Activated CD8-positive, alpha-beta T cell treated with anti-CD3 and anti-CD28 coated beads for 36 hours (primary cell): ENCODE measurements at regions of chr12 and their contacts with region 1.

Region 1: DNA sequence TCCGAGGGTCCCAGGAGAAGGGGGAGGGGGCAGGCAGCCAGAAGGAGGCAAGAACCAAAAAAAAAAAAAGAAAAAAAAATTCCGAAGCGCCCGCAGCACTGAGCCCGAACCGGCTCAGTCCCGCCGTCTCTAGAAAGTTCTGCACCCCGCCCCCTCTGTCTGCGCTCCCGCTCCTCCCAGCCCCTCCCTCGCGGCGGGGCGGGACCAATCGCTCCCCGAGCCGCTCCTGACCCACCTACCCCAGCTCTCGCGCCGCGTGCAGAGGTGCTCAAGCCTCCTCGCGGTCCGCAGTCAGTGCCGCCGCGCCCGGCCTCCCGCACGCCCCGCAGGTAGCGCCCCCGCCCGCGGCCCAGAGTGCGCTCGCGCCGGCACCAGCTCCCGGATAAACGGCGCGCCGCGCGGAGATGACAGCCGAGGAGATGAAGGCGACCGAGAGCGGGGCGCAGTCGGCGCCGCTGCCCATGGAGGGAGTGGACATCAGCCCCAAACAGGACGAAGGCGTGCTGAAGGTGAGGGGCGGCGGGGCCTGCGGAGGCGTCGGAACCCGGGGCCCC is at the start of gene FKBP4:
- DNase-seq: peak; percentile 92
- ATAC-seq: peak; percentile 93
- H3K4me3 Mint-ChIP-seq: peak within 1 kb of the TSS; percentile 92
- H3K27ac Mint-ChIP-seq: peak within 1 kb of the TSS; percentile 84
- H3K4me1 Mint-ChIP-seq: peaks cover 29% of the 10 kb centered on the region
- H3K27me3 Mint-ChIP-seq: no peaks in the 10 kb centered on the region
- CTCF ChIP-seq: no peak
- total RNA-seq, gene FKBP4: 206 to 219 TPM

Region 2: DNA sequence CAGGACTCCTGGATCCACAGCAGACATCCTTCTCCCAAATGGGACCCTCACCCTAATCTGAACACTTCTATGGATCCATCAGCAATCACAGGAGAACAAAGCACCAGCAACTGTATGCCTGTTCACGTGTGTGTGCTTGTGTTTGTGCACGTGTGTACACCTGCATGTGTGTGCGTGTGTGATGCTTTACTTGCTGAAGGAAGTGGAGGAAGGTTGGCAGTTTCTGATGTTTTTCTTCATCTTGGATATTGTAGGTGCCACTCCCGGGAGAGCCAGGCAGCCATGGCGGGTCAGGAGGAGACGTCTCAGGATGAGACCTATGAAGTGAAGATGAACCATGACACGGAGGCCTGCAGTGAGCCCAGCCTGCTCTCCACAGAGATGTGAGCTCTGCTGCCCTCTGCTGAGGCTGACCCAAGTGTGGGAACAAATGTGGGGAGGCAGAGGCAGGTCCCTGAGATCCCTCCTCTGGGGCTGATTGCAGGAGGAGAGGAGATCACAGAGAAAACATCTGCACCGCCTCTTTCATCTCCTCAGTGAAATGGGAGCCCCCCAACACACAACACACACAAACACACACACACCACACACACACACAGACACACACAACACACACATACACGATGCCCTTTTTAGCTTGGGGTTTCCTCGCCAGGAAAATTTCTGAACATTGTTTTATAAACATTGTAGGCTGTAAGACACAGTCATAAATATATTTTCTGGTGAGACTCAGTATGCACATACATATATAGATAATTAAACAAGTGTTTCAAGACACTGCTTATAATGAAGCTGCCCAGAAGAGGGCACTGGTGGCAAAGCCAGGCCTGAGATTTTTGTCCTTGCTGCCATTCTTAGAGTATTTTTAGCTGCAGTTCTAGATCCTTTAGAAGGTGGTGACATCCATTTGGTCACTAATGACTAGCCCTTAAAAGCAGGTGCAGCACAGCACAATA is 112.2 kb before region 1 on chr12:
- CTCF ChIA-PET with region 1: interaction called, 12 read pairs
- POLR2A ChIA-PET with region 1: no interaction called
- intact Hi-C with region 1: no loop called
- DNase-seq: peak; percentile 72
- ATAC-seq: peak; percentile 77
- H3K4me3 Mint-ChIP-seq: no peak overlapping the region
- H3K27ac Mint-ChIP-seq: peak overlapping the region; percentile 87
- H3K4me1 Mint-ChIP-seq: peaks cover 7% of the 10 kb centered on the region
- H3K27me3 Mint-ChIP-seq: no peaks in the 10 kb centered on the region
- CTCF ChIP-seq: peak; percentile 68

Region 3: GRCh38 chr12:2691006-2691344 is 103.8 kb before region 1 on chr12:
- CTCF ChIA-PET with region 1: interaction called, 7 read pairs
- POLR2A ChIA-PET with region 1: interaction called, 13 read pairs
- intact Hi-C with region 1: no loop called
- DNase-seq: peak; percentile 84
- ATAC-seq: peak; percentile 84
- H3K4me3 Mint-ChIP-seq: peak overlapping the region; percentile 82
- H3K27ac Mint-ChIP-seq: peak overlapping the region; percentile 90
- H3K4me1 Mint-ChIP-seq: peaks cover 32% of the 10 kb centered on the region
- H3K27me3 Mint-ChIP-seq: no peaks in the 10 kb centered on the region
- CTCF ChIP-seq: peak; percentile 34

Region 4: GRCh38 chr12:2783936-2784600 is 10.7 kb before region 1 on chr12:
- CTCF ChIA-PET with region 1: interaction called, 11 read pairs
- POLR2A ChIA-PET with region 1: interaction called, 5 read pairs
- intact Hi-C with region 1: no loop called
- DNase-seq: peak; percentile 54
- ATAC-seq: peak; percentile 96
- H3K4me3 Mint-ChIP-seq: peak overlapping the region; percentile 52
- H3K27ac Mint-ChIP-seq: no peak overlapping the region
- H3K4me1 Mint-ChIP-seq: peaks cover 10% of the 10 kb centered on the region
- H3K27me3 Mint-ChIP-seq: peaks cover 18% of the 10 kb centered on the region
- CTCF ChIP-seq: peak; percentile 92

Region 5: GRCh38 chr12:2812290-2813213 is 17.7 kb after region 1 on chr12 and contains the start of gene ITFG2:
- CTCF ChIA-PET with region 1: interaction called, 21 read pairs
- POLR2A ChIA-PET with region 1: interaction called, 27 read pairs
- intact Hi-C with region 1: no loop called
- DNase-seq: peak; percentile 99
- ATAC-seq: peak; percentile 94
- H3K4me3 Mint-ChIP-seq: peak within 1 kb of the TSS; percentile 93
- H3K27ac Mint-ChIP-seq: peak within 1 kb of the TSS; percentile 98
- H3K4me1 Mint-ChIP-seq: peaks cover 34% of the 10 kb centered on the region
- H3K27me3 Mint-ChIP-seq: no peaks in the 10 kb centered on the region
- CTCF ChIP-seq: no peak
- total RNA-seq, gene ITFG2: 25.4 to 25.8 TPM